Activated CD8-positive, alpha-beta memory T cell treated with anti-CD3 and anti-CD28 coated beads, Interleukin-2, amount 10 ng/mL, durations not matched to agents 7 days and 5 days (primary cell): ENCODE measurements at regions of chr1 and their contacts with region 1.

Region 1: DNA sequence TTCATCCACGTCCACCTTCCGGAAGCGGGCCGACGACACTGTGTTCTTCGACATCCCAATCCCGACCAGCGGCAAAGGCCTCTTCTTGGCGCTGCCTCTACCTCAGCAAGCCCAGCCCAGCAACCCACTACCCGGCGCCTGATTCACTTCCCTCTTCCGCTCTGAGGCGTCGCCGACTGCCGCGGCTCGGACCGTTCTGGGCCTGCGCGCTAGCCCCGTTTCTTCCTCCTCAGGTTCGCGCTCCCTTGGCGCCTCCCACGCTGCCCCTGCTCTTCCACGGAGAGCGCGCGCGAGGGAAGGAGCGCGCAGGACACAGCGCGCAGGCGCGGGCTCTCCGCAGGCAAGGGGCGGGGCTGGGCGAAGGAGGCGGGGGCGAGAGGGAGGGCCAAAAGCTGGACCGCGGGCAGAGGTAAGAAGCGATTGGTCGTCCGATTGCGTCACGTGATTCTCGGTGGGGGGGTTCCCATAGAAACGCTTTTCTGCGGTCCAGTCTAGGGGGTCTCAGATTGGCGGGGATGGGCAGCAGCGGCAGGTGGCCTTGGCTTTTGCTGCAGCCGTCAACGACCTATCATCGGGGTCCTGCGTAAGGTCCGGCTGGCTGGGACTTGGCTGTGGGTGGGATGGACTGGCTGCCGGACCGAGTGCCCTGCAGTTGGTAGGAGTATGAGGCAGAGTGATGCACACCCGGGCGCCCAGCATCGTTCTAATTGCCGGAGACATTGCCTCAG is at the start of gene ARPC5:
- DNase-seq: peak; percentile 97
- ATAC-seq: peak; percentile 94
- H3K4me3 Mint-ChIP-seq: peak within 1 kb of the TSS; percentile 98
- H3K27ac Mint-ChIP-seq: peak within 1 kb of the TSS; percentile 100
- H3K4me1 Mint-ChIP-seq: peaks cover 30% of the 10 kb centered on the region
- H3K27me3 Mint-ChIP-seq: peaks cover 19% of the 10 kb centered on the region
- total RNA-seq, gene ARPC5: 205 to 216 TPM

Region 2: DNA sequence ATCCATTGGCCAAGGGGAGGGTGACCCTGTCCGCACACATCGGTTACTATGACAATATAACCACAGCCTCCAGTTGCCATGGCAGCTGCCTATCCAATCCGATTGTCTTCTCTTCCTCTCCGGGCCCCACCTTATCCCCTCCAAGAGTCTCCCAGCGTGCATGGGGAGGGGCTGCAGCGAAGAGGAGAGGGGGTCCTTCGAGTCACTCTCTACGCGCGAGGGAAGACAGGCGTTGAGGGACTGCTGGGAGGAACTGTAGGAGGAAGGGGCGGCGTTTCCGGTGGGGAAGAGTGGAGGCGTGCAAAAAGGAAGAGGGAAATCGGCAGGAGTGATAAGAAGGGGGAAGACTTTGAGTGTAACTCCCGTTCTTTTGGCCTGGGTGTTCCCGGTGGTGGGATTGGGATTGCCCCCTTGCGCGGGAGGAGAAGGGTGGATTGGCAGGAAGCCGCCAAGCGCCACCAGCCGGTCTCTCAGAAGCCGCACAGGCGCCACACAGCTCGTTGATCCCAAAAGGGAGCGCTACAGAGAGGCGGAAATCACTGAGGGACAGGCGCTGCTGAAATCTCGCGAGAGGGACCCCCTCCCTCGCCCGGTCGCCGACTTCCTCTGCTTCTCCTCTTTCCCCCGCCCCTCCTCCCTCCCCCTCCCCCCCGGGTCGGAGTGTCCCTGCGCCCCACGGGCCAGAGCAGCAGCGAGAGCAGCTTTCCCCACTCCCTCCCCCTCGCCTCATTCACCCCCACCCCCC is 163.9 kb before region 1 on chr1:
- CTCF ChIA-PET with region 1: interaction called, 10 read pairs
- DNase-seq: peak; percentile 97
- ATAC-seq: peak; percentile 59
- H3K4me3 Mint-ChIP-seq: peak overlapping the region; percentile 94
- H3K27ac Mint-ChIP-seq: peak overlapping the region; percentile 97
- H3K4me1 Mint-ChIP-seq: peaks cover 23% of the 10 kb centered on the region
- H3K27me3 Mint-ChIP-seq: no peaks in the 10 kb centered on the region